Posterior vena cava (tissue), 2 donors: ENCODE measurements at regions of chr14 and their contacts with region 1.

Region 1: GRCh38 chr14:97747316-97747715 is 950.1 kb downstream of the VRK1 start:
- DNase-seq: no peak

Region 2: DNA sequence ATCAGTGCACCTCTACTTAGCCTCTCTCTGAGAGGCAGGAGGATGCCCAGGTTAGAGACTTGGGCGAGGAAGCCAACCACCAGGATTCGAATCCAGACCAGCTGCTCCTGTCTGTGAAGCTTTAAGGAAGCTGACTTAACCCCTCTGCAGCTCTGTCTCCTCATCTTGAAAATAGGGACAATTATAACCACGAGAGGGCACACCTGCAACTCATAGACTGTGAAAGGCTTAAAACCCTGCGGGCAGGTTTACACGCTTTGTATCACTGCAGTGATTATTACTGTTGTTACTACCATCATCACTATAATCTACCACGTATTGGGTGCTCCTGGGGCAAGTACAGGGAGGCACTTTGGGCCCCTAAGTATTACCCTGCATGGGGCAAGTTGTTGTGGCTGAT is 570.3 kb before region 1 on chr14:
- intact Hi-C with region 1: no loop called
- DNase-seq: no peak

Region 3: DNA sequence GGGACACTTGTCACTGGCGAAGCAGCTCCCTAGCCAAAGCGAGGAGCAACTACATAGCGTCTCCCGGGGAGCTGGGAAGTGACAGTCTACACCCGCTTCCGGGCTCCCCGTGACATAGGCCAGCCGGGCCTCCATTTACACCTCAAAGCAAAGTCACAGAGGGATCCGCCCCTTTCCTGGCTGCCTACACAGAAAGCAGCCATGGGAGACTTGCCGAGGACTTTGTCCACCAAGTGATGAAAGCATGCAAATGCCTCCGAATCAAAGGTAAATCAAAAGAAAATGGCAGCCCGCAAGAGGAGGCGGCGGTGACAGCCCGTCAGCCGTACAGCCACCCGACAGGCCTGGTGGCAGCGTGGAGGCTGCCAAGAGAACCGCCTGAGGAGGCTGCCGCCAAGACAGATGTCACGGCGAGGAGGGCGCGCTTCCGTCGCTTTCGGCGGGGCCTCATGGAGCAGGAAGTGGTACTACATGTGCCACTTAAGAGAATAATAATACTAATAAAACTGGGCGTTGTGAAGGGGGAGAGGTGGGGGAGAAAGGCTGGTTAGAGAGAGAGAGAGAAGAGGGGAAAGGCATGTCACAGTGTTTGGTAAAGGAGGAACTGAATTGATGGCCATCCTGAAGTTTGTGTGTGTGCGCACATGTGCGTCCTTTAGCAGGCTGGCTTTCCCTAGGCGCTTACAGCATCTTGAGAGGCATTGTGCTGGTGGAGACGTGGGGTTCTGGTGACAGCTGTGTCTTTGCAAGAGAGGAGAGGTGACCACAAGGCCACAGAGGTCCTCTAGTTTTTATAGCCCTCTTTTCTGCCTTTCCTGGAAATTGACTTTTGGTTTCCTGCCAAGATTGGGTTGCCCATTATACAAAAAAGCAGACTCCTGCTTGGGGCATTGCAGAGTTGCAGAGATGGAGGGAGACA is 288.4 kb before region 1 on chr14:
- intact Hi-C with region 1: no loop called
- DNase-seq: no peak

Region 4: GRCh38 chr14:97771340-97772045 is 24.2 kb after region 1 on chr14:
- intact Hi-C with region 1: loop called in 1 of 2 experiments (anchors 1 kb)
- DNase-seq: no peak